Calu3 (cell line): ENCODE measurements at regions of chr20 and their contacts with region 1.

Region 1: DNA sequence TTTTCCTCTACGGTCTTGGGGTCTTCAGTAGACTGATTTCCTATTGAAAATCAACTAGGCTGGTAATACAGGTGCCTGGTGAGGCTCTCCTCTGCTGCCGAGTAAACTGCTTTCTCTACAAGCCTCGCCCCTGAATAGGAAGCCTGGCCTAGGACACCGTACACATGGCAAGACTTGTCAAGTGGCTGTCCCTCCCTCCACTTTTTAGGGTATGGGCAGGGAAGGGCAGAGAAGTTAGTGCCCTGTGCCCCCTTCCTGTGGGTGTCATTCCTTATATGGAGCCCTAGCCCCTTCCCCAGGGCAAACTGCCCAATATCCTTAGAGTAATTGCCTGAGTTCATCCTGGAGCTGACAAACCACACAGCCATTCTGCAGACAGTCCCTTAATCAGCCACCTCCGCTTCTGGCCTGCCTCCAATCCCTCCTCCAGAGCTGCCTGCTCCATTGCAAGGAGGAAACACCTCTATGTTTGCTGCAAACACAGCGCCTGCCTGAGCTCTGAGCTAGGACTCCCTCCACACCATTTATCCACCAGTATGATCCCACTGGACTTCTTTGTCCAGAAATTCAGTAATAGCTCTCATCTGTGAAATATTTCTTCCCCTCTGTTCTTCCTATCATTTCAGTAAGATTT is 93.1 kb downstream of the CHD6 start:
- DNase-seq: peak; percentile 63
- H3K4me3 Mint-ChIP-seq: no peak overlapping the region
- H3K27ac Mint-ChIP-seq: no peak overlapping the region
- H3K4me1 Mint-ChIP-seq: peaks cover 20% of the 10 kb centered on the region
- H3K27me3 Mint-ChIP-seq: no peaks in the 10 kb centered on the region
- CTCF ChIP-seq: no peak

Region 2: GRCh38 chr20:41560970-41561369 is 35.9 kb after region 1 on chr20:
- CTCF ChIA-PET with region 1: no interaction called
- intact Hi-C with region 1: loop called (anchors 5 kb)
- DNase-seq: no peak
- H3K4me3 Mint-ChIP-seq: no peak overlapping the region
- H3K27ac Mint-ChIP-seq: no peak overlapping the region
- H3K4me1 Mint-ChIP-seq: peaks cover 28% of the 10 kb centered on the region
- H3K27me3 Mint-ChIP-seq: no peaks in the 10 kb centered on the region
- CTCF ChIP-seq: no peak